A673 (cell line): ENCODE measurements at regions of chr19 and their contacts with region 1.

Region 1: GRCh38 chr19:38134540-38135149 is 89.4 kb downstream of the DPF1 start:
- DNase-seq: peak; percentile 64
- H3K4me3 ChIP-seq: no peak overlapping the region
- H3K27ac ChIP-seq: no peak overlapping the region
- H3K4me1 ChIP-seq: no peaks in the 10 kb centered on the region
- H3K27me3 ChIP-seq: no peaks in the 10 kb centered on the region
- CTCF ChIP-seq: peak; percentile 77

Region 2: DNA sequence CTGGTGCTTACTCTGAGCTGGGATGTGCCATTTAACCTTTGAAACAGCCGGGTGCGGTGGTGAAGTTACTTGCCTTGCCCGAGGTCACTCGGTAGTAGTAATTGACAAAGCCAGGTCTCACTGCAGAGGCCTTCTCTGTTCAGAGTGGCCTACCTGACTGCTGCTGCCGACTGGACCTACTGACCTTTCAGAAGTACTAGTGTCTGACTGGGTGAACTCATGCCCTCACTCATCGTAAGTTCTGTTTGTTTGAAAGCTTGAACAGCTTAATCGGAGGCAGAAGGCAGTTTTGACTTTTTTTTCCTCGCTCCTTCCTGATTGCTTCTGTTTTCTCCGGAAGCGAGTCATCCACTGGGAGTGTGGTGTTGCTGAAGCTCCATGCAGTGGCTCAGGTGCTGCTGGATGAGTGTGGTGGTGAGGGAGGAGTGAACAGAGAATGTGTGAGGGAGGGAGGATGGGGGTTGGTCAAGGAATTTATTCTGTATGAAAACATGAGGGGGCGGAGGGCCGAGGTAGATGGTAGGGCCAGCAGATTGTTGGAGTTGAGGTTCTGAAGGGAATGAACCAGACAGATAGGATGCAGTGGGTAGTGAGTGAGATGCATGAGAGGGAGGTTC is 132.4 kb after region 1 on chr19:
- CTCF ChIA-PET with region 1: interaction called, 12 read pairs
- POLR2A ChIA-PET with region 1: no interaction called
- intact Hi-C with region 1: no loop called
- DNase-seq: no peak
- H3K4me3 ChIP-seq: no peak overlapping the region
- H3K27ac ChIP-seq: no peak overlapping the region
- H3K4me1 ChIP-seq: peaks cover 6% of the 10 kb centered on the region
- H3K27me3 ChIP-seq: no peaks in the 10 kb centered on the region
- CTCF ChIP-seq: no peak

Region 3: DNA sequence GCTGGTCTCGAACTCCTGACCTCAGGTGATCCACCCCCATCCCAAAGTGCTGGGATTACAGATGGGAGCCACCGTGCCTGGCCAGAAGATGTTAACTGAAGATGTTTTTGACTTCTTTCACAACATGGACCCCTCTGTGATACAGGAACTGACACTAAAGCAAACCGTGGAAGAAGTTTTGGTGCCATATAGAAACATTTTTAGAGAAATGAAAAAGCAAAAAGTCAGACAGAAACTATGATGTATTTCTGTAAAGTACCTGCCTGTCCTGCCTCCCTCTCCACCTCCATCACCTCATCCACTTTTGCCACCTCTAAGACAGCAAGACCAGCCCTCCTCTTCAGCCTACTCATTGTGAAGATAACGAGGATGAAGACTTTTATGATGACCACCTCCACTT is 886.4 kb after region 1 on chr19:
- CTCF ChIA-PET with region 1: interaction called, 17 read pairs
- POLR2A ChIA-PET with region 1: no interaction called
- intact Hi-C with region 1: no loop called
- DNase-seq: no peak
- H3K4me3 ChIP-seq: no peak overlapping the region
- H3K27ac ChIP-seq: no peak overlapping the region
- H3K4me1 ChIP-seq: no peaks in the 10 kb centered on the region
- H3K27me3 ChIP-seq: peaks cover 6% of the 10 kb centered on the region
- CTCF ChIP-seq: no peak